ENCODE measurements at regions of chr5 and their contacts with region 1.

Region 1: GRCh38 chr5:140632150-140633020 is 590 bp downstream of the CD14 start:
- DNase-seq: peak in 8 of 9 experiments; percentile 20 to 74 (median 52)
- ATAC-seq: peak; percentile 80
- H3K4me3 ChIP-seq: peak overlapping the region; percentile 53 to 84
- H3K4me3 Mint-ChIP-seq: peak overlapping the region; percentile 90
- H3K27ac ChIP-seq: peak overlapping the region in 1 of 2 experiments; percentile 48
- H3K27ac Mint-ChIP-seq: peak overlapping the region; percentile 74
- H3K4me1 ChIP-seq: peaks cover 15% of the 10 kb centered on the region
- H3K4me1 Mint-ChIP-seq: peaks cover 26% of the 10 kb centered on the region
- H3K27me3 ChIP-seq: no peaks in the 10 kb centered on the region
- H3K27me3 Mint-ChIP-seq: peaks cover 8% of the 10 kb centered on the region
- CTCF ChIP-seq: no peak

Region 2: GRCh38 chr5:140372971-140373487 is 259.4 kb before region 1 on chr5:
- CTCF ChIA-PET with region 1: interaction called, 18 read pairs
- POLR2A ChIA-PET with region 1: no interaction called
- intact Hi-C with region 1: loop called (anchors 5 kb)
- DNase-seq: peak in 7 of 9 experiments; percentile 9 to 64 (median 44)
- ATAC-seq: peak; percentile 81
- H3K4me3 ChIP-seq: no peak overlapping the region
- H3K4me3 Mint-ChIP-seq: no peak overlapping the region
- H3K27ac ChIP-seq: no peak overlapping the region
- H3K27ac Mint-ChIP-seq: no peak overlapping the region
- H3K4me1 ChIP-seq: no peaks in the 10 kb centered on the region
- H3K4me1 Mint-ChIP-seq: peaks cover 2% of the 10 kb centered on the region
- H3K27me3 ChIP-seq: no peaks in the 10 kb centered on the region
- H3K27me3 Mint-ChIP-seq: no peaks in the 10 kb centered on the region
- CTCF ChIP-seq: peak; percentile 75

Region 3: GRCh38 chr5:140547508-140548299 is 84.7 kb before region 1 on chr5 and contains the start of gene EIF4EBP3:
- CTCF ChIA-PET with region 1: interaction called, 16 read pairs
- POLR2A ChIA-PET with region 1: interaction called, 9 read pairs
- intact Hi-C with region 1: loop called in 1 of 2 experiments (anchors 1 kb)
- DNase-seq: peak; percentile 74 to 94 (median 88)
- ATAC-seq: peak; percentile 97
- H3K4me3 ChIP-seq: peak within 1 kb of the TSS; percentile 69 to 96
- H3K4me3 Mint-ChIP-seq: peak within 1 kb of the TSS; percentile 90
- H3K27ac ChIP-seq: peak within 1 kb of the TSS; percentile 88 to 96
- H3K27ac Mint-ChIP-seq: peak within 1 kb of the TSS; percentile 98
- H3K4me1 ChIP-seq: peaks cover 21% of the 10 kb centered on the region
- H3K4me1 Mint-ChIP-seq: peaks cover 31% of the 10 kb centered on the region
- H3K27me3 ChIP-seq: no peaks in the 10 kb centered on the region
- H3K27me3 Mint-ChIP-seq: no peaks in the 10 kb centered on the region
- CTCF ChIP-seq: peak; percentile 72
- total RNA-seq, gene EIF4EBP3: 10.6 to 13.7 TPM

Region 4: DNA sequence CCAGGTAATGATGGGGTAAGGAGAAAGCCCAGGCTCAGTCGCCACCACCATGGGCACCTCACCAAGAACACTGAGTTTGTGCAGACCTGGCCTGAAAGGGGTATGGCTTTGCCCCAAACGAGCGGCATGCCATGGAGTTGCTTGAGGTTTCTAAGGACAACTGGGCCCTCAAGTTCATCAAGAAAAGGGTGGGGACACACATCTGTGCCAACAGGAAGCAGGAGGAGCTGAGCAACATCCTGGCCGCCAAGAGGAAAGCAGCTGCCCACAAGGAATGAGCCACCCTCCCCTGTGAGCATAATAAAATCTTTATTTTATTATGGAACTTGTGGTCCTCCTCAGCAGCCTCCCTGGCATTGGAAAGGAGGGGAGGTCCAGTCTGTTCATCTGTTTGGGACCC is 23.3 kb before region 1 on chr5:
- CTCF ChIA-PET with region 1: no interaction called
- POLR2A ChIA-PET with region 1: no interaction called
- intact Hi-C with region 1: no loop called
- DNase-seq: no peak
- ATAC-seq: no peak
- H3K4me3 ChIP-seq: no peak overlapping the region
- H3K4me3 Mint-ChIP-seq: no peak overlapping the region
- H3K27ac ChIP-seq: no peak overlapping the region
- H3K27ac Mint-ChIP-seq: no peak overlapping the region
- H3K4me1 ChIP-seq: no peaks in the 10 kb centered on the region
- H3K4me1 Mint-ChIP-seq: peaks cover 8% of the 10 kb centered on the region
- H3K27me3 ChIP-seq: peaks cover 0 to 2% of the 10 kb centered on the region in 2 experiments
- H3K27me3 Mint-ChIP-seq: peaks cover 21% of the 10 kb centered on the region
- CTCF ChIP-seq: no peak